ENCODE measurements at regions of chr5 and their contacts with region 1.

Region 1: DNA sequence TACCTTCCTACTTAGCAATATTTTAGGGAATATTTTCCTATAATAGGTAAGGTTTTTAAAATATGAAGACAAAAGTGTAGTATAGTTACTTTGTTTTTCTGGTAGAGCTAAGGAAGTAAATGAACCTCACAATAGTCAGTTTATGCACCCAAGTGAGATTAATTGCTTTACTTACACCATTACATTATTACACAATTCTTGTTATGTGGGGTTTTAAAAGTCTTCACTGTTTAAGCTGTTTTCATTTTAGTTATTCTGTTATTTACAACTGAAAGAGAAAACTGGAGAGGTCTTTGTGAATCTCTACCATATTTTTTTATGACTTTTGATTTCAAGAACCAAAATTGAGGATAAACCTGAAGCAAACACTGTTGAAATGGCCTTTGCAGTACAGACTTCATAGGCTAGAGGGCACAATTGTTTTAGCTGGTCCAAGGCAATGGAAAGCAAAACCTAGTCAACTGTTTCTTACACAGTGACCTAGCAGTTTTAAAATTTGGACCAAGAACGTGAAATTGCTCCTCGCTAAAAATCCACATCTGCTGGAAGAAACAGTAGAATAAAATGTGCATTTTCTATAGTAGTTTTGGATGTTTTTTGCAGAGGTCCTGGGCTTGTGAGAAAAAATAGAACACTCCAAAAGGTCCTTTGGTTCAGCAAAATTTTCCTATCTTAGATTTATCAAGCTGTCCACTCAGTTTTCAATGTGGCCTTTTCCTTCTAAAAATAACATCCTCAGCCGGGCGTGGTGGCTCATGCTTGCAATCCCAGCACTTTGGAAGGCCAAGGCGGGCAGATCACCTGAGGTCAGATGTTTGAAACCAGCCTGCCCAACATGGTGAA is 66.4 kb upstream of the FER start:
- DNase-seq: peak; percentile 21
- ATAC-seq: peak; percentile 66
- H3K4me3 Mint-ChIP-seq: no peak overlapping the region
- H3K27ac Mint-ChIP-seq: no peak overlapping the region
- H3K4me1 Mint-ChIP-seq: no peaks in the 10 kb centered on the region
- H3K27me3 Mint-ChIP-seq: no peaks in the 10 kb centered on the region

Region 2: GRCh38 chr5:108295578-108296368 is 385.5 kb before region 1 on chr5:
- CTCF ChIA-PET with region 1: no interaction called
- POLR2A ChIA-PET with region 1: no interaction called
- intact Hi-C with region 1: no loop called
- DNase-seq: no peak
- ATAC-seq: no peak
- H3K4me3 Mint-ChIP-seq: no peak overlapping the region
- H3K27ac Mint-ChIP-seq: no peak overlapping the region
- H3K4me1 Mint-ChIP-seq: peaks cover 5% of the 10 kb centered on the region
- H3K27me3 Mint-ChIP-seq: no peaks in the 10 kb centered on the region

Region 3: GRCh38 chr5:108727651-108728565 is 46.6 kb after region 1 on chr5:
- CTCF ChIA-PET with region 1: no interaction called
- POLR2A ChIA-PET with region 1: no interaction called
- intact Hi-C with region 1: no loop called
- DNase-seq: peak; percentile 54
- ATAC-seq: peak; percentile 77
- H3K4me3 Mint-ChIP-seq: peak overlapping the region; percentile 58
- H3K27ac Mint-ChIP-seq: peak overlapping the region; percentile 66
- H3K4me1 Mint-ChIP-seq: peaks cover 19% of the 10 kb centered on the region
- H3K27me3 Mint-ChIP-seq: peaks cover 32% of the 10 kb centered on the region

Region 4: GRCh38 chr5:108772626-108773025 is 91.3 kb after region 1 on chr5:
- CTCF ChIA-PET with region 1: no interaction called
- POLR2A ChIA-PET with region 1: no interaction called
- intact Hi-C with region 1: no loop called
- DNase-seq: no peak
- ATAC-seq: no peak
- H3K4me3 Mint-ChIP-seq: no peak overlapping the region
- H3K27ac Mint-ChIP-seq: no peak overlapping the region
- H3K4me1 Mint-ChIP-seq: peaks cover 6% of the 10 kb centered on the region
- H3K27me3 Mint-ChIP-seq: no peaks in the 10 kb centered on the region

Region 5: DNA sequence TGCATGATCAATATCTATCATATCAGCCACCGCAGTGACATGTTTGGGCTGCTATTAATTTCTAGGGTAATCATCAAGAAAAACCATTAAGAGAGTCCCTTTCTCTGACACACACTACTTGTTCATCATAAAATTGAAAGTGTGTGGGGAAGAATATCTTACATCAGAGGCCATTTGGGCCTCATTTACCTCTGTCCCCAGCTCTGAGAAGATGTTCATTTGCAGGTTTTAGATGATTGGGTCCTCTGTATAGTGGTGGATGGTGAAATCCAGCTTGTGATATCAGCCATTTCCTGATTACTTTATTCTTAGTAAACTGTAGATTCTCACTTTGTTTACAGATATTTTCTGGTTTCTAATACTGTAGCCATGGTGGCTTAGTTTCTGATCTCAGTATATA is 758.3 kb after region 1 on chr5:
- CTCF ChIA-PET with region 1: interaction called, 3 read pairs
- POLR2A ChIA-PET with region 1: no interaction called
- intact Hi-C with region 1: loop called in 1 of 2 experiments (anchors 2 kb)
- DNase-seq: no peak
- ATAC-seq: no peak
- H3K4me3 Mint-ChIP-seq: no peak overlapping the region
- H3K27ac Mint-ChIP-seq: no peak overlapping the region
- H3K4me1 Mint-ChIP-seq: no peaks in the 10 kb centered on the region
- H3K27me3 Mint-ChIP-seq: no peaks in the 10 kb centered on the region

Region 6: GRCh38 chr5:109455598-109456096 is 774.3 kb after region 1 on chr5:
- CTCF ChIA-PET with region 1: no interaction called
- POLR2A ChIA-PET with region 1: no interaction called
- intact Hi-C with region 1: loop called in 1 of 2 experiments (anchors 5 kb)
- DNase-seq: peak; percentile 11
- ATAC-seq: peak; percentile 97
- H3K4me3 Mint-ChIP-seq: no peak overlapping the region
- H3K27ac Mint-ChIP-seq: no peak overlapping the region
- H3K4me1 Mint-ChIP-seq: no peaks in the 10 kb centered on the region
- H3K27me3 Mint-ChIP-seq: peaks cover 3% of the 10 kb centered on the region

Region 7: GRCh38 chr5:109479260-109479860 is 798.1 kb after region 1 on chr5:
- CTCF ChIA-PET with region 1: no interaction called
- POLR2A ChIA-PET with region 1: no interaction called
- intact Hi-C with region 1: loop called in 1 of 2 experiments (anchors 5 kb)
- DNase-seq: no peak
- ATAC-seq: no peak
- H3K4me3 Mint-ChIP-seq: no peak overlapping the region
- H3K27ac Mint-ChIP-seq: no peak overlapping the region
- H3K4me1 Mint-ChIP-seq: no peaks in the 10 kb centered on the region
- H3K27me3 Mint-ChIP-seq: peaks cover 8% of the 10 kb centered on the region